Posterior cingulate gyrus (tissue), 11 donors: ENCODE measurements at regions of chr13 and their contacts with region 1.

Region 1: GRCh38 chr13:113208424-113209335 is at the start of gene PCID2:
- DNase-seq: peak; percentile 81 to 98 (median 88)

Region 2: DNA sequence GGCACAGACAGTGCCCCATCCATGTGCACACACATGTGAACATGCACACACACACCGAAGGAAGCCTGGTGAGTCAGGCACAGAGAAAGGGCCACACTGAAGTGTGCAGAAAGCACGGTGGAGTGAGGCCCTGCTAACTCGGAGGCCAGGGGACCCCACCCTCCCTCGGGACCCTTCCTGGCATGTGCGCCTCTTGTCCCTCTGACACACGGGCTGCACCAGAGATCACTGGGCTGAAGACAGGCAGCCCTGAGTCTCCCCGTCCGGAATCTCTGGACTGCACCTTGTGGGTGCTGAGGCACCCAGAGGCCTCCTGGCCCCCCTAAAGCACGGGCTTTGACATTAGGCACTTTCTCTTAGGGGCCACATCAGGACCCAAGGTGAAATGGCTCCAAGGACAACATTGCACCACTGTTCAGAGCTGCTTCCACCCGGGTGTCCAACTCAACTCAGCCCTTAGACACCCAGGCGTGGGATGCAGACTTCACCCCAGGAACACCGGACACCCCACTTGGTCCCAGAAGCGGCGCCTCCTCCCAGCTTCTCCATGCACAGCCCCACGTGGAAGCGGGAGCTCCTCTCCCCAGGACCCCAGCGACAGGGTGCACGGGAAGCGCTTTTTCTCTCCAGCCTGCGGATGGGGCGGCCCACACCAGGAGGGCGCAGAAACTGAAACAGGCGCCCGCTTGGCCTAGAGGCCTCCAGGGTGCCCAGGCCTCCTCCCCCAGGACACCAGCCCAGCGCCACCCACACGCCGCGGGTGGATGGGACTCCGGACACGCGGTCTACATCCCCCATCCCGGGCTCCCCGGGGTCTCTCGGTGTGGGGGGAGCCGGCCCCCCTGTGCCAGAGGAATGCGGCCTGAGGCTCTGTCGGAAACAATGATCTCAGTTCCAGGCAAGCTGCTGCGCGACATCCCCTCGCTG is 742.3 kb before region 1 on chr13:
- intact Hi-C with region 1: no loop called
- DNase-seq: peak in 1 of 10 donors; percentile 70

Region 3: GRCh38 chr13:113044391-113045114 is 164.1 kb before region 1 on chr13:
- intact Hi-C with region 1: loop called (anchors 5 kb)
- DNase-seq: peak; percentile 63 to 98 (median 84)

Region 4: DNA sequence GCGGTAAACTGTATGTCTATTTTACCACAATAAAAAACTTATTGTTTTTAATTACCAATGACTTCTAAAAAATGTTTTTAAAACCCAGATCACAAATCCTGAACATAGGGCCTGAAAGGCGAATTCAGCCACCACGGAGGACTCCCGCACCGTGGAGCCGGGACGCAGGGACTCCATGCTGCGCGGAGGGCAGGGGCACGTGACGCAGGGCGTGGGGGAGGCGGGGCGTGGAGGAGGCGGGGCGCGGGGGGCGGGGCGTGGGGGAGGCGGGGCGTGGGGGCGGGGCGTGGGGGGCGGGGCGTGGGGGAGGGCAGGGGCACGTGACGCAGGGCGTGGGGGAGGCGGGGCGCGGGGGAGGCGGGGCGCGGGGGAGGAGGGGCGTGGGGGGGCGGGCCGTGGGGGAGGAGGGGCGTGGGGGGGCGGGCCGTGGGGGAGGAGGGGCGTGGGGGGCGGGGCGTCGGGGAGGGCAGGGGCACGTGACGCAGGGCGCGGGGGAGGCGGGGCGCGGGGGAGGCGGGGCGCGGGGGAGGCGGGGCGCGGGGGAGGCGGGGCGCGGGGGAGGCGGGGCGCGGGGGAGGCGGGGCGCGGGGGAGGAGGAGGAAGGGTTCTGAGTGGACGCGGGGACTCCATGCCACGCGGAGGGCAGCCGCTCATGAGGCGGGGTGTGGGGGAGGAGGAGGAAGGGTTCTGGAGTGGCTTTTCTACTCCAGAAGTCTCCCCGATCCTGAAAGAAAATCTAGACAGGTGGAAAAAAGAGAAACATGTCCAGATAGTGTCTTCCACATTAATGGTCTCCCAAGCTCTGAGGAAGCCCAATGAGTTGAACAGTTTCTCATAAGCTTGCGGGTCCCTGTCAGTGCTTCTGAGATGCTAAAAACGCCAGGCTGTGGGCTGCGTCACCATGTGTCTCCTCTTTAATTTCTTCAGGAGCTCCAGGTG is 54.6 kb before region 1 on chr13:
- intact Hi-C with region 1: loop called (anchors 2 kb)
- DNase-seq: peak; percentile 70 to 97 (median 83)

Region 5: DNA sequence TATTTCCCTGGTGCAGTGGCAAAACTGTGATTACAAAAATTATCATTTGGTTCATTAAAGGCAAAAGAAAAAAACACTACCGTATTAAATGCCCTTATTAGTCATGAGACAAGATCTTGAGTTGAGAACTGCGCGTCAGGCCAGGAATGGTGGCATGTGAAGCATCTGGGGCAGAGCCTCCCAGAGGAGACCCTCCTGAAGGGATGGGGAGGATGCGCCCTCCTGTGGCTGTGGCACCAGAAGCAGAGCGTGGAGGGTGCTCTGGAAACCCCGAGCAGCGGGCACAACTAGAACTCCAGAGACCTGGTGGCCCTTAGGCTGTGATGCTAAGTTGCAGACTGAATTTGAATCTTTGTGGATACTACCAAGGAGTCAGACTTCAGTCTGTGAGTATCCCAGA is 12.2 kb after region 1 on chr13:
- intact Hi-C with region 1: no loop called
- DNase-seq: no peak

Region 6: DNA sequence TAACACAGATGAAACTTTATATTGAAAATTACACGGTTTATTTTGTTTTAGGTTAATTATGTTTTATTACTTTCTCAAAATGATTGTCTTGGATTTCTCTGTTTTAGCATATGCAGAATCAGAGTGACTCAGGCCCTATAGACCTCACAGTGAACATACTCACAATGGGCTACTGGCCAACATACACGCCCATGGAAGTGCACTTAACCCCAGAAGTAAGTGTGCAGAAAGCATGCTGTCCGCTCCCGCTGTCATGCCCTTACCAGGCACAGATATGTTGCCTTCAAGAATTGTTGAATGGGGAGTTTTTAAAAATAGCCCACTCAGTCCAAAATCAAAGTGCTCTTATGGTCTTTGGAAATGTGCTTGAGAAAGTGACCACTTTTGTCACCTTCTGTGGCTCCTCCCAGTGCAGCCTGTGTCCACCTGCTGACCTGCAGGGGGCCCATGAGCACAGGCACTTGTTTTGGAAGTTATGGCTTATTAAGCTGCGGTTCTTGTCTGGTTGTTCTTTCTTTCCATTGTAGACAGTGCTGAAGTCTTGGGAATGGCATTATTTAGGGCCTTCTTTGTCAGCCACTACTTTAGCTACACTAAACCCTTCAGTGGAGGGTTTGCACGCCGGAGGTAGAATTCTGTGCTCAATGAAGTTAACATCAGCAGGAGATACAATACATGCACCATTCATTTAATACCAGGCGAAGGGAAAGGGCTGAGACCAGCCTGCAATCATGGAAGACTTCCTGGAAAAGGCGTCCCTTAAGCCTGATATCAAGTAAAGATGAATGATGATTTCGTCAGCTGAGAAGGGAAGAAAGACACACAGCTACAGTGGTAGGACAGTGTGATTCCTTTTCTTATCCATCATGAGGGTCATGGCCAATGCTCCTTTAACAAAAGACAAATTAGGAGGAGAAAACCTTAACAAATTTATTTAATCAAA is 37.4 kb after region 1 on chr13:
- intact Hi-C with region 1: no loop called
- DNase-seq: no peak

Region 7: DNA sequence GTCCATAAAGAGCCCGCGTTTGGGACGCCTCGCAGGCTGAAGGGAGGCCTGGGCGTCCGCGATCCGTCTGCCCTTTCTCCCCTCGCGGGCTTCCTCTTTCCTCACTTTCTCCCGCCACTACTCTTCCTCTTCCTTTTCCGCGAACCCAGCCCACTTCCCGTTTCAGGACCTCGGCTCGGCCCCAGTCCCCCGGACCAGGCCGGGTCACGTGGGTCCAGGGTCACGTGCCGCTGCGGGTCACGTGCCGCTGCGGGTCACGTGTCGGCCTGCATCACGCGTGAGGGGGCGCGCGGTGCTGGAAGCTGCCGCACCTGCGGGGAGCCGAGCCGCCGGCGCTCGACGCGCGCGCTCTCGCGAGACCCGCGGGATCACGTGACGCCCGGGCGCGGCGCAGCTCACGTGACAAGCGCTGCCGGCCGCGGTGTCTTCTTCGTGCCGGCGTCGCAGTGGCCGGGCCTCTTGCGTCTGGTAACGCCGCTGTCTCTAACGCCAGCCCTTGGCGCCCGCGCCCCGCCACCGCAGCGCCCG is 88.2 kb after region 1 on chr13 and contains the start of gene LAMP1:
- intact Hi-C with region 1: loop called (anchors 2 kb)
- DNase-seq: peak; percentile 90 to 99 (median 93)

Region 8: GRCh38 chr13:113490496-113491417 is 282.1 kb after region 1 on chr13 and contains the start of gene DCUN1D2:
- intact Hi-C with region 1: loop called (anchors 10 kb)
- DNase-seq: peak; percentile 84 to 99 (median 92)